Motor neuron (in vitro differentiated cells): ENCODE measurements at regions of chr4 and their contacts with region 1.

Region 1: GRCh38 chr4:110005461-110006056 is 92.9 kb downstream of the EGF start:
- ATAC-seq: peak in 6 of 8 experiments; percentile 31 to 82 (median 55)
- H3K4me3 ChIP-seq: no peak overlapping the region
- H3K27ac ChIP-seq: no peak overlapping the region
- H3K4me1 ChIP-seq: peaks cover 2 to 6% of the 10 kb centered on the region in 2 donors

Region 2: DNA sequence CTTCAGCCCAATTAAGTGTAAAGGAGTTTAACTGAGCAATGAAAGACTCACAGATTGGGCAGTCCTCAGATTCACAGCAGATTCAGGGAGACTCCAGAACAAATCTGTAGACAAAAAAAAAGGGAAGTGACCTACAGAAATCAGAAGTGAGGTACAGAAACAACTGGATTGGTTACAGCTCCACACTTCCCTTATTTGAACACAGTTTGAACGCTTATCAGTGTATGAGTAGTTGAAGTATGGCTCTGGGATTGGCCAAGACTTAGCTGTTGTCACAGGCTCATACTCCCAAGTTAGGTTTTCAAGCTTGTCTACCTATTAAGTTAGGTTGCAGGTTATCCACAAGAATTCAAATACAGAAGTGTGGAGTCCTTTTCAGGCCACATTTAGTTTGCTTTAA is 305.2 kb after region 1 on chr4:
- in situ Hi-C with region 1: loop called in 2 of 9 experiments (anchors 10 to 25 kb)
- ATAC-seq: no peak
- H3K4me3 ChIP-seq: no peak overlapping the region
- H3K27ac ChIP-seq: no peak overlapping the region
- H3K4me1 ChIP-seq: no peaks in the 10 kb centered on the region

Region 3: GRCh38 chr4:110508827-110509710 is 503.5 kb after region 1 on chr4:
- in situ Hi-C with region 1: loop called in 8 of 9 experiments (anchors 10 to 25 kb)
- ATAC-seq: peak in 3 of 8 experiments; percentile 31 to 67 (median 59)
- H3K4me3 ChIP-seq: no peak overlapping the region
- H3K27ac ChIP-seq: no peak overlapping the region
- H3K4me1 ChIP-seq: no peaks in the 10 kb centered on the region

Region 4: GRCh38 chr4:110527156-110527555 is 521.6 kb after region 1 on chr4:
- in situ Hi-C with region 1: loop called in 3 of 9 experiments (anchors 10 to 25 kb)
- ATAC-seq: no peak
- H3K4me3 ChIP-seq: no peak overlapping the region
- H3K27ac ChIP-seq: no peak overlapping the region
- H3K4me1 ChIP-seq: no peaks in the 10 kb centered on the region